Gastrocnemius medialis (tissue), 4 donors: ENCODE measurements at regions of chr15 and their contacts with region 1.

Region 1: DNA sequence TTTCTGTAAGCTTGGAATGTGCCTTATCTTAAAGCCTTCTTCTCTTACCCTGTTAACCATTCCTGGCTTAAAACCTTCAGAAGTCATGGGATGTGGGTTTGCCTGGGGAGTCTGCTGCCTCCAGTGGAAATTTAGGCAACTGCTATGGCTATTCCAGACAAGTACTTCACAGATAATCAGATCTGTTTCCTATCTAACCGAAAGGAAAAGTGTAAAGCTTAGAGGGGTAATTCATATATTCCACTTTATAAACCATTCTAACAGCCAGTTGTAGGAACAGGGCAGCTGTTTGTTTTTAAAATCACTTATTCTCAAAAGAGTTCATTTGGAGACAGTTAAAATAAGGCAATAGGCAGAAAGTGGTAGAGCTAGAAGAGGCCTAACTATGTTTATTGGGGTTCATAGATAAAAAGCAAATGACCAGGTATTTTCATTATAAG is 219.9 kb downstream of the TCF12 start:
- DNase-seq: no peak
- ATAC-seq: peak; percentile 47 to 72
- H3K4me3 ChIP-seq: no peak overlapping the region
- H3K27ac ChIP-seq: no peak overlapping the region
- H3K4me1 ChIP-seq: peaks cover 22 to 25% of the 10 kb centered on the region in 2 donors
- H3K27me3 ChIP-seq: no peaks in the 10 kb centered on the region
- CTCF ChIP-seq: peak; percentile 43 to 75 (median 63)
- POLR2A ChIP-seq: no peak

Region 2: GRCh38 chr15:56835718-56836171 is 302.6 kb before region 1 on chr15:
- in situ Hi-C with region 1: no loop called
- intact Hi-C with region 1: loop called (anchors 10 kb)
- DNase-seq: no peak
- ATAC-seq: no peak
- H3K4me3 ChIP-seq: no peak overlapping the region
- H3K27ac ChIP-seq: no peak overlapping the region
- H3K4me1 ChIP-seq: peaks cover 25% of the 10 kb centered on the region in 2 donors
- H3K27me3 ChIP-seq: no peaks in the 10 kb centered on the region
- CTCF ChIP-seq: no peak
- POLR2A ChIP-seq: no peak

Region 3: GRCh38 chr15:57122080-57122840 is 16.1 kb before region 1 on chr15:
- in situ Hi-C with region 1: no loop called
- intact Hi-C with region 1: no loop called
- DNase-seq: no peak
- ATAC-seq: no peak
- H3K4me3 ChIP-seq: no peak overlapping the region
- H3K27ac ChIP-seq: no peak overlapping the region
- H3K4me1 ChIP-seq: peaks cover 8 to 22% of the 10 kb centered on the region in 2 donors
- H3K27me3 ChIP-seq: no peaks in the 10 kb centered on the region
- CTCF ChIP-seq: no peak
- POLR2A ChIP-seq: no peak